IMR-90 (cell line): ENCODE measurements at regions of chr1 and their contacts with region 1.

Region 1: DNA sequence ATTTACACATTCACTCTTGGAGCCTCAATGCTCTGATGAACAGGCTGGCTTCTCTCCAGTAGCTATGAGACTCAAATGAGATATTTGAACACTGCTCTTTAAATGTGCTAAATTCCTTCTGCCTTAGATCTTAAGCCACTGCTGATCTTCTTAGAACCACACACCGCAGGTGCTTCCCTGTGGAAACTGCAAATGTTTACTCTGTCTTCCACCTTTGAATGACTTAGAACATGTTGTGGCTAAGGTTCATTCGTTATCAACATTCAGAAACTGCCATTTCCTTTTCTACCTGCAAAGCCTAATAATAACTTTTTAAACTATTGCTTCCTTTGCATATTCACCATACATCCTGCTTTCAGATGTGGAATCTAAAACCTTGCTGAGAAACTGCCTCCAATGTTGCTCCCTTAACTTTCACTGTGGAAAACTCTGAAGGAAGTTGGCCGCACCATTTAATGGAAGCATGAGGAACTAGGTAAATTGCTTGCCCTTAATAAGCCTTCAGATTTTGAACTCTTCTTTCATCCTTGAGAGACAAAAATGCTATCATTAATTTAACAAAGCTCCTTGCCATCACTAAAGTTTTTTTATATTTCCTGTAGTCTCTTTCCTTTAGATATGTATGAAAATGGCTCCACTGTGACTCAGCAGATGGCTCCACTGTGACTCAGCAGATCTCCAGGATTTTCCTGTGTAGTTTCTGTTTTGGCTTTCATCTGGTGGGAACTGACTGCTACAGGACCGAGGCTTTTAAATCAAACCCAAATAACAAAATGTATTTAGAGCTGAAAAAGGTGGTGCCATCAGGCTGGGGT is 143.8 kb downstream of the TNFSF18 start:
- DNase-seq: peak; percentile 93
- ATAC-seq: 0 out of 2 replicates have a peak, but pooled peaks have one; percentile 3
- H3K4me3 ChIP-seq: no peak overlapping the region
- H3K27ac ChIP-seq: peak overlapping the region; percentile 67
- H3K4me1 ChIP-seq: peaks cover 23% of the 10 kb centered on the region
- H3K27me3 ChIP-seq: no peaks in the 10 kb centered on the region
- CTCF ChIP-seq: no peak
- POLR2A ChIP-seq: 0 out of 2 replicates have a peak, but pooled peaks have one; percentile 22
- RAD21 ChIP-seq: no peak

Region 2: GRCh38 chr1:172380441-172381244 is 526.3 kb before region 1 on chr1:
- CTCF ChIA-PET with region 1: no interaction called
- POLR2A ChIA-PET with region 1: no interaction called
- dilution Hi-C with region 1: no loop called
- in situ Hi-C with region 1: no loop called
- intact Hi-C with region 1: no loop called
- DNase-seq: no peak
- ATAC-seq: no peak
- H3K4me3 ChIP-seq: no peak overlapping the region
- H3K27ac ChIP-seq: no peak overlapping the region
- H3K4me1 ChIP-seq: peaks cover 9% of the 10 kb centered on the region
- H3K27me3 ChIP-seq: no peaks in the 10 kb centered on the region
- CTCF ChIP-seq: no peak
- POLR2A ChIP-seq: no peak
- RAD21 ChIP-seq: no peak

Region 3: GRCh38 chr1:172662464-172663109 is 244.4 kb before region 1 on chr1:
- CTCF ChIA-PET with region 1: no interaction called
- POLR2A ChIA-PET with region 1: no interaction called
- dilution Hi-C with region 1: no loop called
- in situ Hi-C with region 1: no loop called
- intact Hi-C with region 1: no loop called
- DNase-seq: peak; percentile 86
- ATAC-seq: peak; percentile 62
- H3K4me3 ChIP-seq: no peak overlapping the region
- H3K27ac ChIP-seq: no peak overlapping the region
- H3K4me1 ChIP-seq: no peaks in the 10 kb centered on the region
- H3K27me3 ChIP-seq: no peaks in the 10 kb centered on the region
- CTCF ChIP-seq: no peak
- POLR2A ChIP-seq: no peak
- RAD21 ChIP-seq: no peak

Region 4: GRCh38 chr1:172940174-172940855 is 33.3 kb after region 1 on chr1:
- CTCF ChIA-PET with region 1: no interaction called
- POLR2A ChIA-PET with region 1: interaction called, 12 read pairs
- dilution Hi-C with region 1: no loop called
- in situ Hi-C with region 1: no loop called
- intact Hi-C with region 1: no loop called
- DNase-seq: peak; percentile 90
- ATAC-seq: peak; percentile 73
- H3K4me3 ChIP-seq: no peak overlapping the region
- H3K27ac ChIP-seq: peak overlapping the region; percentile 90
- H3K4me1 ChIP-seq: peaks cover 18% of the 10 kb centered on the region
- H3K27me3 ChIP-seq: no peaks in the 10 kb centered on the region
- CTCF ChIP-seq: no peak
- POLR2A ChIP-seq: no peak
- RAD21 ChIP-seq: no peak

Region 5: GRCh38 chr1:172993462-172994039 is 86.6 kb after region 1 on chr1:
- CTCF ChIA-PET with region 1: interaction called, 3 read pairs
- POLR2A ChIA-PET with region 1: no interaction called
- dilution Hi-C with region 1: no loop called
- in situ Hi-C with region 1: no loop called
- intact Hi-C with region 1: loop called (anchors 1 kb)
- DNase-seq: peak; percentile 78
- ATAC-seq: peak; percentile 86
- H3K4me3 ChIP-seq: no peak overlapping the region
- H3K27ac ChIP-seq: no peak overlapping the region
- H3K4me1 ChIP-seq: peaks cover 12% of the 10 kb centered on the region; the same call in 1 of the 2 replicates
- H3K27me3 ChIP-seq: no peaks in the 10 kb centered on the region
- CTCF ChIP-seq: no peak
- POLR2A ChIP-seq: no peak
- RAD21 ChIP-seq: no peak

Region 6: DNA sequence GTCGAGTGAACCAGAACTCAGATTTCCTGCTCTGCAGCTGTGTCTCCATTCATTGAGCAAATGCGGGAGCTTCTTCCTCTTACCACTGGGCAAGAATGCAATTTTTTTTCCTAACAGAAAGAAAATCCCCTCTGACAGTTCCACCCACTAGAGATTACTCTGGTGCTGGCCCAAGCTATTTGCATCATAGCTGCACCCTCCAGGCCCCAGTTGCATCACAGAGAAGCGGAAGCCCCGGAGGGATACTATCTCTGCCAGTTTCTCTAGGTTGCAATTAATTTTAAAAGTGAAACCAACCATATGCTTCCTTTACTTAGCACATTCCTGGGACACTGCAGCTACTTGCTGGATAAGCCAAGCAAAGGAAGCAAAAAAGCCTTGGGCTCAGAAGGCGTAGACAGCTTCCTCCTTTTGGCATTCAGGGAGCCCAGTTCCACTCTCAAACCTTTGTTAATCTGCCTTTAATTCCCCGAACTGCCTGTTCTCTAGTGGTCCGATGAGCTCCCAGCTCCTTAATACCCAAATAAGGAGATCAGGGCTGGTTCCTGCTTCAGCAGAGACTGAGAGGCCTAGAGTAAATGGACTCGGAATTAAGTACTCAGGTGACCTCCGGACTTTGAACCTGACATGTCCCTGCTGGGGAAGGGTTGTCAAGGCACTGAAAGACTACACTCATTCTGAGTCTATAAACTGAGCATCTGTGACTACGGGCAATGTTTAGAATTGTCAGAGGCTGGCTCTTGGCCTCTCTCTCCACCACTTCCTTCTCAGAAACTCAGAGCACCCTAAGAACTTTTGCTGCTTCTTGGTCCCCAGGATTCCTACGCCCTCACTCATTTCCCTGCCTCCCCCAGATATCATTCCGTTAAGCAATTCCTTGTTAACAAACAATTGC is 216.2 kb after region 1 on chr1:
- CTCF ChIA-PET with region 1: no interaction called
- POLR2A ChIA-PET with region 1: interaction called, 4 read pairs
- dilution Hi-C with region 1: no loop called
- in situ Hi-C with region 1: no loop called
- intact Hi-C with region 1: loop called (anchors 1 kb)
- DNase-seq: peak; percentile 95
- ATAC-seq: peak; percentile 85
- H3K4me3 ChIP-seq: peak overlapping the region; percentile 27
- H3K27ac ChIP-seq: peak overlapping the region; percentile 87
- H3K4me1 ChIP-seq: peaks cover 8% of the 10 kb centered on the region
- H3K27me3 ChIP-seq: no peaks in the 10 kb centered on the region
- CTCF ChIP-seq: no peak
- POLR2A ChIP-seq: no peak
- RAD21 ChIP-seq: peak; percentile 9; the same call in 1 of the 2 replicates

Region 7: GRCh38 chr1:173409613-173410012 is 502.6 kb after region 1 on chr1:
- CTCF ChIA-PET with region 1: no interaction called
- POLR2A ChIA-PET with region 1: no interaction called
- dilution Hi-C with region 1: no loop called
- in situ Hi-C with region 1: no loop called
- intact Hi-C with region 1: loop called (anchors 10 kb)
- DNase-seq: peak; percentile 76
- ATAC-seq: 0 out of 2 replicates have a peak, but pooled peaks have one; percentile 15
- H3K4me3 ChIP-seq: no peak overlapping the region
- H3K27ac ChIP-seq: no peak overlapping the region
- H3K4me1 ChIP-seq: peaks cover 10% of the 10 kb centered on the region
- H3K27me3 ChIP-seq: no peaks in the 10 kb centered on the region
- CTCF ChIP-seq: no peak
- POLR2A ChIP-seq: no peak
- RAD21 ChIP-seq: no peak